Mammary epithelial cell (primary cell): ENCODE measurements at regions of chr17 and their contacts with region 1.

Region 1: GRCh38 chr17:43576563-43577229 is 30.6 kb upstream of the ETV4 start:
- DNase-seq: peak; percentile 50
- H3K4me3 ChIP-seq: no peak overlapping the region
- H3K27ac ChIP-seq: no peak overlapping the region
- H3K4me1 ChIP-seq: peaks cover 41% of the 10 kb centered on the region
- H3K27me3 ChIP-seq: no peaks in the 10 kb centered on the region
- CTCF ChIP-seq: peak; percentile 72 to 92

Region 2: DNA sequence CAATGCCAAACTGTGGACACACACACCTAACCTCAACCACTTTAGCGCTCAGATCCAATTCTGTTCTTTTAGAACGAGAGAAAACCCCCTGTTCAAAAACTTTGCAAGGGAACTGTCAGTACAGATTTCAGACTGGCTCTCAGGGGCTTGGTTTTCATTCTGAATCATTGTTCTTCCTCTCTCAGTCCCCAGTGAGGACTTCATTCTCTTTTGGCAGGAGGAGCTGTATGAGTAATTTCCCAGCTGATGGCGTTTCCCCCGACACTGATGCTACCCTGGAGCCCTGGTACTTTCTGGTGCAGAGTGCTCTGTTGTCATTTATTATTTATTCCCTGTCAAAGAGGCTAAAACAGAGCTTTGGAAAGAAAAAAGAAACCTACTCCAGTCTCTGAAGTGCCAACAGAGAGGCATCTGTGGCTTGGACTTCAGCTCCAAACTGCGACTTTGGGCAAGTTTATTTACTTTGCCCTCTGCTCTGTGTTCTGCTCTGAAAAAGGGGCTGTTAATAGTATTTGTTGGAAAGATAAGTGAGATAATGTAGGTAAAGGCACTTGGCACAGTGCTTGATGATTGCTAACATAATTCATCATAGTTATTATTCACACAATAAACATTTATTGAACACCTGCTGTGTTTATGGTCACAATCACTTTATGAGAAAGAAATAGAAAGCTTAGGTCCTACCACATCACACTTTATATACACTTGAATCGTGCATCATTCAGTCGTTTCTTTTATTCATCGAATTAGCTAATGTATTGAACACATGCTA is 58.9 kb before region 1 on chr17:
- CTCF ChIA-PET with region 1: no interaction called
- dilution Hi-C with region 1: no loop called
- in situ Hi-C with region 1: loop called in 1 of 2 experiments (anchors 5 kb)
- intact Hi-C with region 1: loop called (anchors 1 kb)
- DNase-seq: peak; percentile 9
- H3K4me3 ChIP-seq: no peak overlapping the region
- H3K27ac ChIP-seq: no peak overlapping the region
- H3K4me1 ChIP-seq: no peaks in the 10 kb centered on the region
- H3K27me3 ChIP-seq: no peaks in the 10 kb centered on the region
- CTCF ChIP-seq: no peak

Region 3: DNA sequence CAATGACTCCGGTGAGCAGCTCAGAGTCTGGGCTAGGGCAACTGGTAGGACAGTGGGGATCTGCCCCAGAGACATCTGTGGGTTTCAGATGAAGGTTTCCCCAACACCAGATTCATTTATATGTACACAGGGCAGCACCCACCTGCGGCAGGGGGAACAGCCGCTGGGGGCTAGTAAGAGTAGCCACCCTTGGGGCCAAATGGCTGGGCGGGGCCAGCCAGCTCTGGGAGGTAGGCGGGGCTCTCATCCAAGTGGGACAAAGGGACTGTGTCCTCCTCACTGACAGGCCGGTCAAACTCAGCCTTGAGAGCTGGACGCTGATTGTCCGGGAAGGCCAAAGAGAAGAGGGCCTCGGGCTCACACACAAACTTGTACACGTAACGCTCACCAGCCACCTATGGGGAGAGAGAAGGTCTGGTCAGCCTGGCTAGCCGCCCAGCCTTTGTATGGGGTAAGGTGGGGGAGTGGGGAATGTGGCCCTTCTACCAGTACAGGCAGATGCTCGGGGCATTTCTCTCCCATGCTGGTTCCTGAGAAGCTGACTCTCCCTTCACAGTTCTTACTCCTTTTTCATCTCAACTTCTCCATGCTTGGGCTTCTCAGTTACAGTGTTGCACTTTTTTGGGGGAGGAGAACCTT is 48.2 kb before region 1 on chr17:
- CTCF ChIA-PET with region 1: interaction called, 4 read pairs
- dilution Hi-C with region 1: no loop called
- in situ Hi-C with region 1: loop called in 1 of 2 experiments (anchors 5 kb)
- intact Hi-C with region 1: no loop called
- DNase-seq: no peak
- H3K4me3 ChIP-seq: no peak overlapping the region
- H3K27ac ChIP-seq: no peak overlapping the region
- H3K4me1 ChIP-seq: peaks cover 27% of the 10 kb centered on the region
- H3K27me3 ChIP-seq: no peaks in the 10 kb centered on the region
- CTCF ChIP-seq: no peak

Region 4: GRCh38 chr17:43546319-43547188 is 30.1 kb before region 1 on chr17 and contains the start of gene ETV4:
- CTCF ChIA-PET with region 1: no interaction called
- dilution Hi-C with region 1: no loop called
- in situ Hi-C with region 1: no loop called
- intact Hi-C with region 1: loop called (anchors 2 kb)
- DNase-seq: peak; percentile 97
- H3K4me3 ChIP-seq: peak within 1 kb of the TSS; percentile 44 to 75 (median 60)
- H3K27ac ChIP-seq: peak within 1 kb of the TSS; percentile 84
- H3K4me1 ChIP-seq: peaks cover 46% of the 10 kb centered on the region
- H3K27me3 ChIP-seq: no peaks in the 10 kb centered on the region
- CTCF ChIP-seq: no peak
- total RNA-seq, gene ETV4: 10.2 to 46.0 TPM

Region 5: GRCh38 chr17:43615330-43616028 is 38.8 kb after region 1 on chr17:
- CTCF ChIA-PET with region 1: no interaction called
- dilution Hi-C with region 1: no loop called
- in situ Hi-C with region 1: no loop called
- intact Hi-C with region 1: loop called (anchors 1 kb)
- DNase-seq: peak; percentile 86
- H3K4me3 ChIP-seq: no peak overlapping the region
- H3K27ac ChIP-seq: peak overlapping the region; percentile 30
- H3K4me1 ChIP-seq: peaks cover 38% of the 10 kb centered on the region
- H3K27me3 ChIP-seq: no peaks in the 10 kb centered on the region
- CTCF ChIP-seq: no peak

Region 6: GRCh38 chr17:43673516-43674323 is 97.0 kb after region 1 on chr17:
- CTCF ChIA-PET with region 1: interaction called, 10 read pairs
- dilution Hi-C with region 1: loop called (anchors 5 kb)
- in situ Hi-C with region 1: loop called (anchors 5 kb)
- intact Hi-C with region 1: loop called (anchors 1 kb)
- DNase-seq: peak; percentile 50
- H3K4me3 ChIP-seq: no peak overlapping the region
- H3K27ac ChIP-seq: no peak overlapping the region
- H3K4me1 ChIP-seq: peaks cover 7% of the 10 kb centered on the region
- H3K27me3 ChIP-seq: no peaks in the 10 kb centered on the region
- CTCF ChIP-seq: peak; percentile 95 to 97

Region 7: GRCh38 chr17:43745541-43745940 is 168.8 kb after region 1 on chr17:
- CTCF ChIA-PET with region 1: no interaction called
- dilution Hi-C with region 1: no loop called
- in situ Hi-C with region 1: no loop called
- intact Hi-C with region 1: no loop called
- DNase-seq: no peak
- H3K4me3 ChIP-seq: no peak overlapping the region
- H3K27ac ChIP-seq: no peak overlapping the region
- H3K4me1 ChIP-seq: peaks cover 14% of the 10 kb centered on the region
- H3K27me3 ChIP-seq: no peaks in the 10 kb centered on the region
- CTCF ChIP-seq: no peak

Region 8: DNA sequence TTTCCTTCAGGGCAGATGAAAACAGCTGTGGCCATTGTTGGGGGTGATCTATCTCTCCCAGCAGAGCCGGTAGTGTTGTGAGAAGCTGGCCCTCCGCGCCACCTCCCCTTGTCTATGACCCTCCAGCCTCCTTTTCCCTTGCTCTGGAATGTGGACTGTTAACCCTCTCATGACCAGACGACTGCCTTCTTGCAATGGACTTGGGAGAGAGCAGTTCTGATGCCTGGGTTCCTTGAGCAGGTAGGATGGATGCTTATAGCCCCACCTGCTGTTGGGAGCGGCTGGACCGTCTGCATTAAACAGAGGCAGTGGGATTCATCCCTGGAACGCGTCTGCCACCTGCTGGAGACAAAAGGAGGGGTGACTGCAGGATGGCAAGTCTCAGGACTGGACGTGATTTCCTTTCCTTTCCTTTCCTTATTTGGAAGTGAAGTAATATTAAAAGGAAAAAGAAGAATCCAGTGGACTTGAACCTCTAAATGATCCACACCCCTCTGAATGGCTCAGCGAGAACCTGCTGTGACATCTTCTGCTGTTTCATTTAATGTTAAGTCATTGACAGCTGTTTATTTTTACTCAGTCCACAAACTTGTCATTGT is 183.7 kb after region 1 on chr17:
- CTCF ChIA-PET with region 1: no interaction called
- dilution Hi-C with region 1: no loop called
- in situ Hi-C with region 1: loop called in 1 of 2 experiments (anchors 5 kb)
- intact Hi-C with region 1: loop called (anchors 1 kb)
- DNase-seq: peak; percentile 85
- H3K4me3 ChIP-seq: peak overlapping the region in 1 of 3 experiments; percentile 5
- H3K27ac ChIP-seq: no peak overlapping the region
- H3K4me1 ChIP-seq: peaks cover 21% of the 10 kb centered on the region
- H3K27me3 ChIP-seq: no peaks in the 10 kb centered on the region
- CTCF ChIP-seq: peak; percentile 100